PC-9 (cell line): ENCODE measurements at regions of chr14 and their contacts with region 1.

Region 1: GRCh38 chr14:28751467-28752058 is 15.0 kb upstream of the FOXG1 start:
- DNase-seq: peak in 1 of 2 experiments; percentile 31
- H3K4me3 ChIP-seq: no peak overlapping the region
- H3K27ac ChIP-seq: no peak overlapping the region
- H3K4me1 ChIP-seq: no peaks in the 10 kb centered on the region
- H3K27me3 ChIP-seq: no peaks in the 10 kb centered on the region
- CTCF ChIP-seq: peak; percentile 70

Region 2: GRCh38 chr14:28661171-28661772 is 90.3 kb before region 1 on chr14:
- CTCF ChIA-PET with region 1: no interaction called
- POLR2A ChIA-PET with region 1: interaction called, 5 read pairs
- intact Hi-C with region 1: loop called (anchors 5 kb)
- DNase-seq: peak; percentile 25 to 38
- H3K4me3 ChIP-seq: no peak overlapping the region
- H3K27ac ChIP-seq: no peak overlapping the region
- H3K4me1 ChIP-seq: peaks cover 13% of the 10 kb centered on the region
- H3K27me3 ChIP-seq: no peaks in the 10 kb centered on the region
- CTCF ChIP-seq: no peak

Region 3: DNA sequence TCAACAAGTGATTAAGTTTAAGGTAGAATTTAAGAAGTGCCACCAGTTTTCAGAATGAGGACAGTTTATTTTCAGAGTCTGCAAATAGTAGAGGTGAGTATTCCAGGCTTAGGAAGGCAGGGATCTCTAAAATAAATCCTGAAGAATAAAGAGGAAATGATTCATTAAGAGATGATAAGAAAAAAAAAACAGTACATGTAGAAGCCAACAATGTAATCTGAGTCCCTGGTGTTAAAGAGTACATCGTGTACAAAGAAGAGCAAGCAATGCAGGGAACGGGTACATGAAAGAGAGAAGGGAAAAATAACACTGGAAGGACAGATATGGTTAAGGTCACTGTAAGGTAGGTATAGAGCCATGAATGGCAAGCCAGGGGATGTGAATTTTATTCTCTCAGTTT is 80.1 kb before region 1 on chr14:
- CTCF ChIA-PET with region 1: interaction called, 10 read pairs
- POLR2A ChIA-PET with region 1: interaction called, 8 read pairs
- intact Hi-C with region 1: no loop called
- DNase-seq: peak in 1 of 2 experiments; percentile 37
- H3K4me3 ChIP-seq: no peak overlapping the region
- H3K27ac ChIP-seq: no peak overlapping the region
- H3K4me1 ChIP-seq: peaks cover 30% of the 10 kb centered on the region
- H3K27me3 ChIP-seq: no peaks in the 10 kb centered on the region
- CTCF ChIP-seq: no peak

Region 4: DNA sequence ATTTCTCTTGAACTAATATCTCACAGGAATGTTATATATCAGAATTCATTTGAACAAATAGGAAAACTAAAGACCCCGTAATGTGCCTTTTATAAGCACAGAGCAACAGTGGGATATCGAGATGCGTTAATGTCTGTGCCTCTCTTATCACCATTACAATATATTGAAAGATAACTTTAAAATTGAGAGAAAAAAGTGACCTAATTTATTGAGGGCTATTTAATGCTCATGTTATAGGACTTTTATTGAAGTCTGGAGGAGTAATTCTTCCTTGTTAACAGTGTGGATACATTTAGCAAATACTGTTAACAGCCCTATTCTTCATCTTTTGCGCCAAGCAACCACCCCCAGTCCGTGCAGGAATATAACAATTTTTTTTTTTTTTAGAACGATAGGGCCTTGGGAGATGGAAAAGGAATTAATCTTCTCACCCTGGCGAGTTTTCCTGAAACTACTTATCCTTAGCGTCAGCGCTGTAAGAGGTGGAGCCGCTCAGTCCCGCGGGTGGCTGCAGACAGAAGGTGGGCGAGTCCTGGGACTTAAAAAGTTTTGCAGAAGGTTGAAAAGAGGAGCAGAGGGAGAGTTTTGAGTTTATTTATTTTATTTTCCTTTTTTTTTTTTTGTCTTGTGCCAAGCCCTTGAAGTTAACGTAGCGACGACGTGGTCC is 26.0 kb after region 1 on chr14:
- CTCF ChIA-PET with region 1: no interaction called
- POLR2A ChIA-PET with region 1: no interaction called
- intact Hi-C with region 1: no loop called
- DNase-seq: no peak
- H3K4me3 ChIP-seq: no peak overlapping the region
- H3K27ac ChIP-seq: no peak overlapping the region
- H3K4me1 ChIP-seq: no peaks in the 10 kb centered on the region
- H3K27me3 ChIP-seq: no peaks in the 10 kb centered on the region
- CTCF ChIP-seq: no peak

Region 5: DNA sequence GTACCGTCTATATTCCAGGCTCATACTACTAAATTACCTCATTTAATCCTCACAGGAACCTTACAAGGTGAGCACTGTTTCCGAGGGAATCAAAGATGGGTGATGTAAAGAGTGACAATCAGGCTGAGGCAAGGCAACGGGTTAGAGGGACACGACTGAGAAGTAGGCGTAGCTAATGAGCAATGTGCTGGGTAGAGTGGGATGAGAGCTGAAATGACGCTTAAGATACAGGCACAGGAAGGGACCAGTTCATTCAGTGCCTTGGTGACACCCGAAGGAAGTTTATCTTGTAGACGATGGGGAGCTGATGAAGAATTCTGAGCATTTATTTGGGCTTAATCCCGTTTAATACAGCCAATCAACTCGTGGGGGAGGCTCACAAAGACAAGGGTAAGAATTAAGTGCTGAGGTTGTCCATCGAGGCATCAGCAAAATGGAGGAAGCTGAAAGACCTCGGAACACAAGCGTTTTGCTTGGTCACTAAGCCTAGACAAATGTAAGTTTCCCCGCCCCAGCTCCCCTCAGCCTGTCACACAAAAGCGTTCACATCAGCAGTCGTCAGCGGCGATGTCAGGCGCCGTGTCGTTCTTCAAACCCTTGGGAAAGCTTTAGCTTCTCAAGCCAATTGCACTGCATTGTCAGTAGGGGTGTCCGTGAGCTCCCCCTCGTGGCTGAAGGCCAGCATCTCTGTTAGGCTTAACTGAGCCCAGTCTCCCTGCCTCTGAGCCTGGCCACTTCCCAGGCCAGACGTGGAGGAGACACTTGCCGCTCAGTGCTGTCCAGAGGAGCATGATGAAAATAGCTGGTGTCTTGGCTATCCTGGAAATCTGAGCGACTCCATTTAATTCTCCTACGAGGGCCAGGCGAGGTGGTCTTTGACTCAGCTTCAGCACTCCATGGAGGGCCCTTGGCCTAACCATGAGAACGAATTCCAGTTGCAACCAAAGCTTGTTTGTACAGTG is 1518.9 kb after region 1 on chr14:
- CTCF ChIA-PET with region 1: no interaction called
- POLR2A ChIA-PET with region 1: no interaction called
- intact Hi-C with region 1: loop called (anchors 5 kb)
- DNase-seq: peak; percentile 33 to 65
- H3K4me3 ChIP-seq: no peak overlapping the region
- H3K27ac ChIP-seq: no peak overlapping the region
- H3K4me1 ChIP-seq: no peaks in the 10 kb centered on the region
- H3K27me3 ChIP-seq: no peaks in the 10 kb centered on the region
- CTCF ChIP-seq: peak; percentile 72

Region 6: GRCh38 chr14:30443368-30444007 is 1691.9 kb after region 1 on chr14:
- CTCF ChIA-PET with region 1: no interaction called
- POLR2A ChIA-PET with region 1: no interaction called
- intact Hi-C with region 1: loop called (anchors 5 kb)
- DNase-seq: no peak
- H3K4me3 ChIP-seq: no peak overlapping the region
- H3K27ac ChIP-seq: no peak overlapping the region
- H3K4me1 ChIP-seq: no peaks in the 10 kb centered on the region
- H3K27me3 ChIP-seq: no peaks in the 10 kb centered on the region
- CTCF ChIP-seq: peak; percentile 65